Psoas muscle (tissue), 8 donors: ENCODE measurements at regions of chr3 and their contacts with region 1.

Region 1: DNA sequence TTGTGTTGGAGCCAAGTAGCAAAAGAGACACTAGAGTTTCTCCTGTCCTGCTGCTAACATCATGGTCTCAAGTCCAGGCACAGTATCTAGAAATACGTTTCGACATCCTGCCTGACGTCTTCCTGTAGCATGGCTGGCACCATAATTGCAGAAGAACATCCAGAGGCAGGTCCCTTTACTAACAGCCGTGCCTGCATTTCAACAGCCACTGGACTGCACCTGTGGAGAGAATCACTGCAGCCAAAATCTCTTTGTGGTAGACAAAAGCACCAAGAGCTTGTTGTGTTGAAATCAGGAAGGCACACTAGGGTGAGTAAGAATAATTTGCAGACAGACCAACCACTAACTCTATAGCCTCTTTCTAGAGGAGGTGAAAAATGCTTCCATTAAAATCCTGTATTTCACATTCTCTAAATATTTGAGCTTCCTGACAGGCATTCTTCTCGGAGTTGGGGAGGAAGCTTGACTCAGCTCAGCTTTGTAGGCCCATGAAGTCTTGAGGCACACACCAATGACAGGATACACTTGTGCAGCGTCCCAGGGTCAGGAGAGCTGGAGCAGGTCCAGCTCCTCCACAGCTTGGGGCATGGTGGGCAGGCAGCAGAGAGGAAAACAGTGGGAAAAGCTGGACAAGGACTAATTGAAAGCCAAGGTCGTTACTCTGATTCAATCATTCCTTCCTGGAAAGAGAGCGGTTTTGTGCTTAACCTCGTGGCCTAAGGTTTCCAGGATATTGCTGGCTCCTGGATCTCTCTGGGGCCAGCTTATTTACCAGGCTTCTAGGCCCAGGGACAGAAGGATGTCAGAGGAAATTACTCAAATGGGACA is 244.9 kb downstream of the FAM43A start:
- DNase-seq: peak; percentile 54 to 62
- ATAC-seq: peak; percentile 57 to 76 (median 70)
- H3K4me3 ChIP-seq: no peak overlapping the region
- H3K27ac ChIP-seq: peak overlapping the region; percentile 51
- H3K4me1 ChIP-seq: peaks cover 12% of the 10 kb centered on the region
- H3K27me3 ChIP-seq: peaks cover 0 to 3% (median 0%) of the 10 kb centered on the region in 3 donors
- CTCF ChIP-seq: no peak

Region 2: DNA sequence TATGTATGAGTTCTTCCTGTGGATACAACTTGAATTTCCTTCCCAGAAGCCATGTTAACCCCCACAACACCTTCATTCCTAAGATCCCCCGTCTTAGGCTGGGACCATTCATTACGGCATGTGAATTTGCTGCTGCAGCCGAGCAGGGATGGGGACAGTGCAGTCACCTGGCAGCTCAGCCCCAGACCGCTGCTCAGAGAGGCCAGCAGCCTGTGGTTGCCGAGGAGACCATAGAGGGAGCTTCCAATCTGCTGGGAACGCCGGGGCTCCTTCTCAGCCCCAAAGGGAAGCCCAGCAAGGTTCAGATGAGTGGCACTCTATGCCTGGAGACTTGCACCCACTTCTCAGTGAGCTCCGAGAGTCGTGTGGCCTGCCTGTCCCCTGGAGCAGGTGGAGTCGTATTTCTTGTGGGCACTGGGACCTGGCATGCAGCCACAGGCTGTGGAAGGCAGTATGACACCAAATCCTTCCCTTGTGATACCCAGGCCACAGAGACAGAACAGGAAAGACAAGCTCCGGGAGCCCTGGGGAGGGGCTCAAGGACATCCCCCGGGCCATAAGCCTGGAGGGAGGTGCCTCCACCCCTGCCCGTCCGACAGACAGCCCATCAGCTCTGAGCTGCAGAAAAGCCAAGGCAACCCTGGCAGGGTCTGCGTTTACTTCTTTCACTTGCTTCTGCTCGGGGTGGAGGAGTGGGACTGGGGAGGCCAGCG is 77.6 kb before region 1 on chr3:
- intact Hi-C with region 1: no loop called
- DNase-seq: peak in 1 of 2 donors; percentile 85
- ATAC-seq: peak; percentile 62 to 82 (median 73)
- H3K4me3 ChIP-seq: peak overlapping the region; percentile 25
- H3K27ac ChIP-seq: peak overlapping the region; percentile 53
- H3K4me1 ChIP-seq: peaks cover 22% of the 10 kb centered on the region
- H3K27me3 ChIP-seq: no peaks in the 10 kb centered on the region
- CTCF ChIP-seq: no peak

Region 3: DNA sequence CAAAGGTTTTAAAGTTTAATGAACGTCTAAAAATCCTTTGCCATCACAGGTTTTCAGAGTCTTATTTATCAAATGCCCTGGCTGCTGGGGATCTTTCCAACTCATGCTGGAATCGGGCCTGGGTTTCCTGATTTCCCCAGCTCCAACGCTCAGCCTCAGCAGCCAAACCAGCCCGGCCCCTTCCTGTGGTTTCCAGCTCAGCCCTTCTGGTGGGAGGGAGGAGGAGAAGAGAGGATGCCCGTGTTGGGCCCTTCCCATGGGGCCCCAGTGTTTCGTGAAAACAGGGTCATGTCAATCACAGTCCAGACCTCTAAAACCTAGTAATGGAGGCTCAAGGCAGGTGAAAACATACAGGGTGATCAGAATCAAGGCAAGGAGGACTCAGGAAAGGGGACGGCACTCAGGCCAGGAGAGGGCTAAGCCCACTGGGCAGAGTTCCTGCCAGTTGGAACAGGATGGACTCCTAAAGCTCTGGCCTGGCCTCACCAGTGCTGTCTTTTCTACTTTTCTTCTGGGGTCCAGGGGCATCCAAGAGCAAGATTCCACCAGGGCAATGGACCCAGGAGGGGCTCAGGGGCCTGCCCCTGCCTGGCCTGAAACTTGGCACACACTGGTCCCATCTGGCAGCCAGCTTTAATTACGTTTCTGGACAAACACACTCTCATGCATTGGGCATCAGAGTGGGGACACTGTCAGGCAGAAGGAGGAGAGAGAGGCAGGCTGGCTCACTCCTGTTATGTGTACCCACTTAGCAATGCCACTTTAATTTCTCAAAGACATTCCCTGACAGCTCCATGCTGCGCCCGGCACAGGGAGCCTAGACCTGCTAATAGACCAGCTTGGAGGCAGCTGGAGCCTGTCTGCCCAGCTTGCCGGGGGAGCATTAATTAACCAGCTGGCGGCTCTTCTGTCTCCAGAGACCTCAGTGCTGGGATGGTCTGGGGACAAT is 50.3 kb before region 1 on chr3:
- intact Hi-C with region 1: loop called in 1 of 2 experiments (anchors 5 kb)
- DNase-seq: peak in 1 of 2 donors; percentile 61
- ATAC-seq: peak in 1 of 4 donors; percentile 51
- H3K4me3 ChIP-seq: no peak overlapping the region
- H3K27ac ChIP-seq: peak overlapping the region; percentile 30
- H3K4me1 ChIP-seq: peaks cover 15% of the 10 kb centered on the region
- H3K27me3 ChIP-seq: no peaks in the 10 kb centered on the region
- CTCF ChIP-seq: no peak

Region 4: DNA sequence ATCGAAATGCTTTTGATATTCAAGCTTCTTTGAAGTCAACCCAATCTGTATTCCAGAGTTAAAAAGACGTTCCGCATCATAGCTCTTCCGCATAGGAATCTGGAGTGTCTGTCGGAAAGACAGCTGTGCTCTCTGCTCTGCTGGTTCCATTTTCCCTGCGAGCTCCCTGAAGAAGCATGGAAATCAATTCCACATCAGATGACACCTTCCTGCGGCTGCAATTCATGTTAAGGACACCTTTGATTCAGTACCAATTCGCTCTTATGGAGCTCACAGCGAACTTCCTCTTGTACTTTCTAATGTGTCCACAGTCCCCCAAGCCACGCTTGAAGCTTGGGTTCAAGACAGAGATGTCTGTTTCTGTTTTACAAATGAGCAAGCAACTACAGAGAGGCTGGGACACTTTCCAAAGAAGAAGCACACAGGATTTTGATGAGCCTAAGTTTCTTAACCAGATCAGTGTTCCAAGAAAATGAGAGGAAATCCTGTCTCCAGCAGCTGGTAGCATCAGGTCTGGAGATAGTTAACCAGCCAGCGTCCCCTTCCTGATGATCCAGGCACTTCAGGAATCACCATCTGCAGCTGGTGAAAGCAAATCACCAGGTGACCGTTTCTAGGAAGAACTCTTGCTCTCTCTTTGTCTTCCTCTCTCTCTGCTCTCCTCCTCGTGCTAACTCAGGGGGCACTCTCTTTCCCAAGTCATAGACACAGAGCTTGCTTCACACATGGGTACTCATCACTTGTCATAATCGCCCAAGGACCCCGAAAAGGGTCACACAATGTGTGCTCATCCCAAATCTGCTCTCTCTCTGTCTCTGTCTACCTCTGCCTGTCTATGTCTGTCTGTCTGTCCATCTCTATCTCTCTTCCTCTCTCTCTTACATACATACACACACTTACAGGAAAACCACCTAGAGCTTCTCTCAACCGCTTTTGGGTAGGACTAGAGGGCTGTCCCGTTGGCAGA is 36.8 kb after region 1 on chr3:
- intact Hi-C with region 1: no loop called
- DNase-seq: no peak
- ATAC-seq: no peak
- H3K4me3 ChIP-seq: no peak overlapping the region
- H3K27ac ChIP-seq: no peak overlapping the region
- H3K4me1 ChIP-seq: no peaks in the 10 kb centered on the region
- H3K27me3 ChIP-seq: no peaks in the 10 kb centered on the region
- CTCF ChIP-seq: no peak